ENCODE measurements at regions of chr15 and their contacts with region 1.

Region 1: DNA sequence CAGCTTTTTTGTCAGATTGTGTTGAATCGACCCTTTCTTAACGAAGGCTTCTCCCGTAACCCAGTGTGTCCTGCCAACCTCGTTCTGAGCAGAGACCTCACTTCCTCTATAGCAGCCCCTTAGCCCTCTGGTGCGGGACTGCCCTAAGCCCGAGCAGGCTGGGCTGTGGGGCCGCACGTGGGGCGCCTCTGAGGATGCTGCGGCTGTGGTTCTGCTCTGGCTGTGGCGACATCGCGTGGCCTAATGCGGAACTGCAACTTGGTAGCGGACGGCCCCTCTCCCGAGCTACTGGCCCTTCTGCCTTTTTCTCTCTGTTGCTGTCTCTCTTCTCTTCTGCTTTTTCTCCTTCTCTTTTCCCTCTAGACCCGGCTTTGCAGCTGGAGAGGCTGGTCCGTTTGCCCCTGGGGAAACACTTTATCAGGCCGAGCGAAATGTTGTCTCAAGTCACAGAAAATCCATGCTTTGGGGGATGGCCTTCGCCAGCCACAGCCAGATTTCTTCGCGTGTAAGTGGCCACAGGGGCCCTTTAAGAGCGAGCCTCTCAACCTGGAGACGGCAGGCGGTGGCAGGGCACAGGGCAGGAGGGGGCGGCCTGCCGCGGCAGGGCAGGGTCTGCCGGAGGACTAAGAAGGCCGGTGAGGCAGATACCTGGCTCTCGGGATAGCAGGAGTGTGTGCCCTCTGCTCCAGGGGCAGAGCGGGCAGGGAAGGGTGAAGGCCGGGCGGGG is 19.4 kb upstream of the KIF23 start:
- DNase-seq: peak; percentile 86
- ATAC-seq: peak; percentile 94
- H3K4me3 Mint-ChIP-seq: no peak overlapping the region
- H3K27ac Mint-ChIP-seq: no peak overlapping the region
- H3K4me1 Mint-ChIP-seq: peaks cover 17% of the 10 kb centered on the region
- H3K27me3 Mint-ChIP-seq: peaks cover 6% of the 10 kb centered on the region

Region 2: GRCh38 chr15:69305204-69305931 is 89.4 kb before region 1 on chr15:
- CTCF ChIA-PET with region 1: no interaction called
- POLR2A ChIA-PET with region 1: no interaction called
- DNase-seq: no peak
- ATAC-seq: no peak
- H3K4me3 Mint-ChIP-seq: no peak overlapping the region
- H3K27ac Mint-ChIP-seq: no peak overlapping the region
- H3K4me1 Mint-ChIP-seq: no peaks in the 10 kb centered on the region
- H3K27me3 Mint-ChIP-seq: peaks cover 9% of the 10 kb centered on the region

Region 3: GRCh38 chr15:69405110-69405509 is 10.4 kb after region 1 on chr15:
- CTCF ChIA-PET with region 1: interaction called, 17 read pairs
- POLR2A ChIA-PET with region 1: no interaction called
- DNase-seq: no peak
- ATAC-seq: no peak
- H3K4me3 Mint-ChIP-seq: no peak overlapping the region
- H3K27ac Mint-ChIP-seq: no peak overlapping the region
- H3K4me1 Mint-ChIP-seq: no peaks in the 10 kb centered on the region
- H3K27me3 Mint-ChIP-seq: peaks cover 28% of the 10 kb centered on the region

Region 4: GRCh38 chr15:69413822-69414700 is 19.3 kb after region 1 on chr15 and contains the start of gene KIF23:
- CTCF ChIA-PET with region 1: interaction called, 17 read pairs
- POLR2A ChIA-PET with region 1: no interaction called
- DNase-seq: peak; percentile 97
- ATAC-seq: peak; percentile 98
- H3K4me3 Mint-ChIP-seq: peak within 1 kb of the TSS; percentile 89
- H3K27ac Mint-ChIP-seq: peak within 1 kb of the TSS; percentile 90
- H3K4me1 Mint-ChIP-seq: peaks cover 31% of the 10 kb centered on the region
- H3K27me3 Mint-ChIP-seq: peaks cover 8% of the 10 kb centered on the region
- total RNA-seq, gene KIF23: 80.7 to 87.9 TPM

Region 5: GRCh38 chr15:69444686-69445085 is 50.0 kb after region 1 on chr15:
- CTCF ChIA-PET with region 1: no interaction called
- POLR2A ChIA-PET with region 1: no interaction called
- DNase-seq: no peak
- ATAC-seq: no peak
- H3K4me3 Mint-ChIP-seq: no peak overlapping the region
- H3K27ac Mint-ChIP-seq: no peak overlapping the region
- H3K4me1 Mint-ChIP-seq: peaks cover 9% of the 10 kb centered on the region
- H3K27me3 Mint-ChIP-seq: no peaks in the 10 kb centered on the region

Region 6: GRCh38 chr15:69462493-69463181 is 67.9 kb after region 1 on chr15:
- CTCF ChIA-PET with region 1: no interaction called
- POLR2A ChIA-PET with region 1: no interaction called
- DNase-seq: peak; percentile 95
- ATAC-seq: peak; percentile 91
- H3K4me3 Mint-ChIP-seq: peak overlapping the region; percentile 74
- H3K27ac Mint-ChIP-seq: peak overlapping the region; percentile 72
- H3K4me1 Mint-ChIP-seq: peaks cover 34% of the 10 kb centered on the region
- H3K27me3 Mint-ChIP-seq: peaks cover 14% of the 10 kb centered on the region

Region 7: DNA sequence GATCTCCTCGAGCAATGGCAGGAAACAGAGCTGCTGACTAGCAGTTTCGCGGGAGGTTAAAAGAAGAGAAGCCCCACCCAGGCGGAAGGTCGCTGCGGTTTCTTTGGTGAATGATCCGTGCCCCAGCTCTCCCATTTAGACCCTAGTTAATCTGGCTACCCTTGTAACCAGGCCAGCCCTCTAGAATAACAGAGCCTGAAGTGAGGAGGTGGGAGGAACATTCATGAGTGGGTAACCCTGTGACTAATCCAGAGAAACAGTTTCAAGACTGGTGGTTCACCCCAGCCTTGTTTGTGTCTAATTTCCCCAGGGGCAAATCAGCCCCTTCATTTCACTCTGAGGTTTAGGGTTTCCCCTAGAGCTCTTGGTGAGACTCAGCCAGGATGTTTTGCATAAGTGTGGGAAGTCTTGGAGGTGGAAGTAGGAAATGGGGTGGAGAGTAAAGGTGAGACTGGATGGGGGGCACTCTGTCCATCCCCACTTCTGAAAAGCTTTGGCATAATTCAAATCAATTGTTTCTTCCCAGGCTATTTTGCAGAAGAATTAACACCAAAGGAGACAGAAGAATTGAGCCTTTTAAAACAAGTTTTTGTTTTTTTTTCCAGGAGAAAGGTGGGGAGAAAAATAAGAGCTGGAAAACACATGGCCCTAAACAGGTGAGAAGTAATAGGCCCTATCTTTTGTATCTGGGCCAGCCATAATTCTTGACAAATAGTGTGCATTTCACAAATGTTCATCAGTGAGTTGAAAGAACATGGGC is 361.0 kb after region 1 on chr15:
- CTCF ChIA-PET with region 1: no interaction called
- POLR2A ChIA-PET with region 1: no interaction called
- DNase-seq: peak; percentile 93
- ATAC-seq: peak; percentile 76
- H3K4me3 Mint-ChIP-seq: peak overlapping the region; percentile 51
- H3K27ac Mint-ChIP-seq: peak overlapping the region; percentile 76
- H3K4me1 Mint-ChIP-seq: peaks cover 86% of the 10 kb centered on the region
- H3K27me3 Mint-ChIP-seq: peaks cover 5% of the 10 kb centered on the region

Measured in activated CD8-positive, alpha-beta T cell treated with anti-CD3 and anti-CD28 coated beads, Interleukin-2, amount 10 ng/mL, durations not matched to agents 7 days and 5 days (primary cell).